Activated CD8-positive, alpha-beta T cell treated with anti-CD3 and anti-CD28 coated beads, Interleukin-2, amount 10 ng/mL, durations not matched to agents 7 days and 5 days (primary cell): ENCODE measurements at regions of chr18 and their contacts with region 1.

Region 1: DNA sequence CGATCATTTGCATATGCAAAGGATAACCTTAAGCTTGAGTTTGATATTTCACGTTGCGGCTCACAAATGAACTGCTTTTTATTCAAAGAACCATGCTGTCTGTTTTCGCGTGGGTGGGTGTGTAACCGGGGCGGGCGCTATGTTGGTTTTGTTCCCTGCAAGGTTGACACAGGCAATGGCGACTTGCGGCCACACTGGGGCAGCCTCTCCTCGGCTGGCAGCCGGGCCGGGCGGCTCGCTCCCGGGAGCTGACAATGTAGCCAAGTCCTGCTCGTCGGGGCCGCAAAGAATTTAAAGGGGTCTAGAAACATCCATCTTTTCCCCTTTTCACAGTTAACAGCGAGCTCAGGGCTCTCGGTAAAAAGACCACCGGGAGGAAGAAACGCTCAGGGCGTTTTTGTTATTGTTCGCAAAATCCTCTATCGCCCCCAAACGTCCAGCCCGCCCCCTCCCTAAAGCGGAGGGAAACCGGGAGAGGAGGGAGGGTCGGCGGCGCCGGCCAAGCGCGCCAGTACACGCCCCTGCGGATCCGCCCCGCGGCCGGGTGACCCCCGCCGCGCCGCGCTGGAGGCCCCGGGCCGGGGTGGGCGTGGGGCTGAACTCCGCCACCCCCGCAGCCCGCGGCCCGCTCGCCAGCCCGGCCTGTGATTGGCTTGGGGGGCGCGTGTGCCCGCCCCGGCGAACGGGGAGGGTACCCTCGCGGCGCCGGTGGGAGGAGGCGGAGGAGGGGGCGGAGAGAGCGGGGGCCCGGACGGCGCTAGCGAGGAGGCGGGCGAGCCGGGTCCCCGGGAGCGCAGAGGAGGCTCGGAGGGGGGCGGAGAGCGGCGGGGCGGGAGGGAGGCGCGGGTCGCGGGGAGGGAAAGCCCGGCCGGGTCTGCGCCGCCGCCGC is at the start of gene NEDD4L:
- DNase-seq: peak; percentile 84
- ATAC-seq: peak; percentile 85
- H3K4me3 Mint-ChIP-seq: peak within 1 kb of the TSS; percentile 87
- H3K27ac Mint-ChIP-seq: peak within 1 kb of the TSS; percentile 55
- H3K4me1 Mint-ChIP-seq: peaks cover 25% of the 10 kb centered on the region
- H3K27me3 Mint-ChIP-seq: peaks cover 30% of the 10 kb centered on the region
- total RNA-seq, gene NEDD4L: 3.4 to 4.3 TPM

Region 2: GRCh38 chr18:58117786-58118403 is 74.2 kb after region 1 on chr18:
- CTCF ChIA-PET with region 1: interaction called, 21 read pairs
- POLR2A ChIA-PET with region 1: no interaction called
- DNase-seq: no peak
- ATAC-seq: no peak
- H3K4me3 Mint-ChIP-seq: no peak overlapping the region
- H3K27ac Mint-ChIP-seq: no peak overlapping the region
- H3K4me1 Mint-ChIP-seq: peaks cover 10% of the 10 kb centered on the region
- H3K27me3 Mint-ChIP-seq: peaks cover 2% of the 10 kb centered on the region

Region 3: GRCh38 chr18:58125183-58125582 is 81.4 kb after region 1 on chr18:
- CTCF ChIA-PET with region 1: interaction called, 21 read pairs
- POLR2A ChIA-PET with region 1: no interaction called
- DNase-seq: no peak
- ATAC-seq: no peak
- H3K4me3 Mint-ChIP-seq: no peak overlapping the region
- H3K27ac Mint-ChIP-seq: no peak overlapping the region
- H3K4me1 Mint-ChIP-seq: peaks cover 25% of the 10 kb centered on the region
- H3K27me3 Mint-ChIP-seq: peaks cover 10% of the 10 kb centered on the region

Region 4: DNA sequence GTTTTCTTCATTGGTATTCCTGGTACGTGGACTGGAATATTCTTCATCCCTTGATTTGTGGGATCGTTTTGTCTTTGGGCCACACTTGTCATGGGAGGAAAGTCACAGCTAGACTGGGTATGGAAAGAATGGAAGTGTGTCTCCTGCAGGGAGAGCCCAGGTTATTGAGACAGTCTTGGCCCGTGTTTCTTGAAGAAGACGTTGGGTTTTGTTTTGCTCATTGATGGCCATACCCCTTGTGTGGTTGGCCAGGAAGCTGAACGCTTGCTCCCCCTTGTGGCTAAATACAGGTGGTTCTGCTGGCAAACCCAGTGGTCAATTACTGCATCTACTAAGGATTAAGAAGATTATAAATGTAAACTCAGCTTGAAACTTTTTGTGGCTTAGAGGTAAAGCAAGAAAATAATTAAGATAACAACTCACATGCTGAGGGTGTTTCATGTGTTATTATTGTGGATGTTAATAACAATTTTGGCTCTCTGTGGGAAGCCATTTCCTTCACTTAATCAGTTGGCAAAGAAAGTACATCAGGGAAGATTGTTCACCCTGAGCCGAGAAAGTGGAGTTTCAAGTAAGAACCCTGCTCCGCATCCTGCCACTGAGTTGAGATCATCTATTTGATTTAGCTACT is 92.1 kb after region 1 on chr18:
- CTCF ChIA-PET with region 1: interaction called, 11 read pairs
- POLR2A ChIA-PET with region 1: no interaction called
- DNase-seq: peak; percentile 68
- ATAC-seq: peak; percentile 86
- H3K4me3 Mint-ChIP-seq: no peak overlapping the region
- H3K27ac Mint-ChIP-seq: no peak overlapping the region
- H3K4me1 Mint-ChIP-seq: peaks cover 20% of the 10 kb centered on the region
- H3K27me3 Mint-ChIP-seq: peaks cover 14% of the 10 kb centered on the region

Region 5: DNA sequence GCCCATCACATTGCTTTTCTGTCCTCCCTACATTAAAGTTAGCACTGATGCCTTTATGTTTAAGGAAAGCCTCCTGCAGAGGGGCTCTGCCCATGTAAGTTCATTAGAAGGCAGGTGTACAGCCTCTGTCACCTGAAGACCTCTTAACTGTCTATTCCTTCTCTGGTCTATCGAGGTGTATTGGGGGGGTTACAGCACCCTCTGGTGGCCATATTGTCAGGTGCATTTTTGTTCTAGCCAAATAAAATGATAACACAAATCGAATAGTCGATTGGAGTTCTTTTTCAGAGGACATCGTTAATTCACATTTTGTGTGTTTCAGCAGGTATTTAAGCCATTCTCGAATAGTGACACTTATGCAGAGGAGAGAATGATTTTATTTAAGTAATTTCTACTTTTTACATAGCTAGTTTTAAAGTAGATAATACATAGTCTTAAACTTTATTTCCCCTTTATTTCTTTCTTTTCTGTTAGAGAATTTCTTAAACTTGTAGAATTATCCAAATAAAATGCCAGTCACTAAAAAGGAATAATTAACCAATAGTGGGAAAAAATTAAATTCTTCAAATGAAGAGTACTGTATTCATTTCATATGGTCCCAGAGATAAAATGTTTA is 137.1 kb after region 1 on chr18:
- CTCF ChIA-PET with region 1: interaction called, 12 read pairs
- POLR2A ChIA-PET with region 1: no interaction called
- DNase-seq: peak; percentile 73
- ATAC-seq: no peak
- H3K4me3 Mint-ChIP-seq: no peak overlapping the region
- H3K27ac Mint-ChIP-seq: no peak overlapping the region
- H3K4me1 Mint-ChIP-seq: no peaks in the 10 kb centered on the region
- H3K27me3 Mint-ChIP-seq: peaks cover 3% of the 10 kb centered on the region